CD4-positive, alpha-beta memory T cell (primary cell): ENCODE measurements at regions of chr16 and their contacts with region 1.

Region 1: GRCh38 chr16:68520649-68521086 is 18.4 kb upstream of the ZFP90 start:
- DNase-seq: peak; percentile 85 to 89 (median 86)
- H3K4me3 ChIP-seq: peak overlapping the region in 1 of 2 donors; percentile 40
- H3K4me3 Mint-ChIP-seq: peak overlapping the region; percentile 31 to 78 (median 50)
- H3K27ac ChIP-seq: no peak overlapping the region
- H3K27ac Mint-ChIP-seq: peak overlapping the region in 6 of 7 donors; percentile 71 to 95 (median 88)
- H3K4me1 ChIP-seq: peaks cover 9% of the 10 kb centered on the region
- H3K4me1 Mint-ChIP-seq: peaks cover 6 to 8% (median 7%) of the 10 kb centered on the region in 4 donors
- H3K27me3 ChIP-seq: no peaks in the 10 kb centered on the region
- H3K27me3 Mint-ChIP-seq: no peaks in the 10 kb centered on the region

Region 2: GRCh38 chr16:68345351-68345810 is 175.3 kb before region 1 on chr16:
- CTCF ChIA-PET with region 1: no interaction called
- POLR2A ChIA-PET with region 1: no interaction called
- intact Hi-C with region 1: no loop called
- DNase-seq: no peak
- H3K4me3 ChIP-seq: no peak overlapping the region
- H3K4me3 Mint-ChIP-seq: no peak overlapping the region
- H3K27ac ChIP-seq: no peak overlapping the region
- H3K27ac Mint-ChIP-seq: peak overlapping the region in 1 of 7 donors; percentile 47
- H3K4me1 ChIP-seq: no peaks in the 10 kb centered on the region
- H3K4me1 Mint-ChIP-seq: peaks cover 0 to 8% (median 3%) of the 10 kb centered on the region in 4 donors
- H3K27me3 ChIP-seq: no peaks in the 10 kb centered on the region
- H3K27me3 Mint-ChIP-seq: no peaks in the 10 kb centered on the region

Region 3: GRCh38 chr16:68406451-68407152 is 114.1 kb before region 1 on chr16:
- CTCF ChIA-PET with region 1: interaction called, 414 read pairs
- POLR2A ChIA-PET with region 1: no interaction called
- intact Hi-C with region 1: no loop called
- DNase-seq: no peak
- H3K4me3 ChIP-seq: no peak overlapping the region
- H3K4me3 Mint-ChIP-seq: no peak overlapping the region
- H3K27ac ChIP-seq: no peak overlapping the region
- H3K27ac Mint-ChIP-seq: no peak overlapping the region
- H3K4me1 ChIP-seq: peaks cover 3% of the 10 kb centered on the region
- H3K4me1 Mint-ChIP-seq: peaks cover 4 to 19% (median 10%) of the 10 kb centered on the region in 4 donors
- H3K27me3 ChIP-seq: no peaks in the 10 kb centered on the region
- H3K27me3 Mint-ChIP-seq: peaks cover 1 to 5% of the 10 kb centered on the region in 2 donors

Region 4: GRCh38 chr16:68538880-68539701 is 18.4 kb after region 1 on chr16 and contains the start of gene ZFP90:
- CTCF ChIA-PET with region 1: interaction called, 19 read pairs
- POLR2A ChIA-PET with region 1: interaction called, 3 read pairs
- intact Hi-C with region 1: no loop called
- DNase-seq: peak; percentile 85 to 89 (median 88)
- H3K4me3 ChIP-seq: peak within 1 kb of the TSS; percentile 63 to 87
- H3K4me3 Mint-ChIP-seq: peak within 1 kb of the TSS; percentile 92 to 99 (median 96)
- H3K27ac ChIP-seq: peak within 1 kb of the TSS; percentile 83
- H3K27ac Mint-ChIP-seq: peak within 1 kb of the TSS; percentile 95 to 100 (median 100)
- H3K4me1 ChIP-seq: peaks cover 17% of the 10 kb centered on the region
- H3K4me1 Mint-ChIP-seq: peaks cover 14 to 33% (median 23%) of the 10 kb centered on the region in 4 donors
- H3K27me3 ChIP-seq: no peaks in the 10 kb centered on the region
- H3K27me3 Mint-ChIP-seq: no peaks in the 10 kb centered on the region
- total RNA-seq, gene ZFP90: 53.6 to 55.3 TPM